Activated CD4-positive, alpha-beta T cell treated with anti-CD3 and anti-CD28 coated beads for 36 hours (primary cell): ENCODE measurements at regions of chr1 and their contacts with region 1.

Region 1: GRCh38 chr1:101309334-101310311 is 72.8 kb downstream of the S1PR1 start:
- DNase-seq: peak; percentile 83
- ATAC-seq: peak; percentile 57
- H3K4me3 Mint-ChIP-seq: peak overlapping the region; percentile 63
- H3K27ac Mint-ChIP-seq: peak overlapping the region; percentile 80
- H3K4me1 Mint-ChIP-seq: peaks cover 71% of the 10 kb centered on the region
- H3K27me3 Mint-ChIP-seq: no peaks in the 10 kb centered on the region

Region 2: DNA sequence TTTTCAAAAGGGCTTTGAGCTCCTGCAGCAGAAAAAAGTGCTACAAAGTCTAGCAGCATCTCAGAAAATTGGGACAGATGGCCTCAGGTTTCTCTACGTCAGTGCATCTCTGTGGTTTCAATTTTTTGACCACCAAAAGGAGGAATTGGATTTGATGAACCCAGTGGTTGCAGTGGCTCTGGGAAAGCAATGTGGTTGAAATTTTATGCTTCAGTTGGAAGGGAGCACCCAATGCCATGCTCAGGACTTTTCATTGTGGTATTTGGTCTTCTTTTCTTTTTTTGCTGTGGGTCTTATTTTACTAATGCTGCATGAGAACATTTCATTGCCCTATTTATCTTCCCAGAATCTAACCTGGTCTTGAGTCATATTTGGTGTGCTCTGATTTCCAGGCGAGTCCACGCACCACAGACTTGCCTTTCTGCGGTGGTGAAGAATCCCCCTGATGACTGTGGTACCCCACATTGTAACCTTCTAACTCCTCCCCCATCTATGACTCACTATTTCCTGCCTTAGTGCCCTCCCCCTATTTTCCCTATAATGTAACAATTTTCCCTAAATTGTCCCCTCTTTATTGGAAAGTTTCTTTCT is 16.1 kb before region 1 on chr1:
- CTCF ChIA-PET with region 1: interaction called, 15 read pairs
- POLR2A ChIA-PET with region 1: interaction called, 7 read pairs
- intact Hi-C with region 1: loop called in 1 of 2 experiments (anchors 1 kb)
- DNase-seq: peak; percentile 79
- ATAC-seq: peak; percentile 25
- H3K4me3 Mint-ChIP-seq: peak overlapping the region; percentile 43
- H3K27ac Mint-ChIP-seq: peak overlapping the region; percentile 82
- H3K4me1 Mint-ChIP-seq: peaks cover 83% of the 10 kb centered on the region
- H3K27me3 Mint-ChIP-seq: no peaks in the 10 kb centered on the region

Region 3: GRCh38 chr1:101323535-101323934 is 13.9 kb after region 1 on chr1:
- CTCF ChIA-PET with region 1: interaction called, 14 read pairs
- POLR2A ChIA-PET with region 1: no interaction called
- intact Hi-C with region 1: no loop called
- DNase-seq: no peak
- ATAC-seq: no peak
- H3K4me3 Mint-ChIP-seq: no peak overlapping the region
- H3K27ac Mint-ChIP-seq: no peak overlapping the region
- H3K4me1 Mint-ChIP-seq: no peaks in the 10 kb centered on the region
- H3K27me3 Mint-ChIP-seq: peaks cover 2% of the 10 kb centered on the region

Region 4: GRCh38 chr1:101346419-101346818 is 36.8 kb after region 1 on chr1:
- CTCF ChIA-PET with region 1: interaction called, 58 read pairs
- POLR2A ChIA-PET with region 1: no interaction called
- intact Hi-C with region 1: no loop called
- DNase-seq: no peak
- ATAC-seq: no peak
- H3K4me3 Mint-ChIP-seq: no peak overlapping the region
- H3K27ac Mint-ChIP-seq: no peak overlapping the region
- H3K4me1 Mint-ChIP-seq: peaks cover 30% of the 10 kb centered on the region
- H3K27me3 Mint-ChIP-seq: no peaks in the 10 kb centered on the region

Region 5: DNA sequence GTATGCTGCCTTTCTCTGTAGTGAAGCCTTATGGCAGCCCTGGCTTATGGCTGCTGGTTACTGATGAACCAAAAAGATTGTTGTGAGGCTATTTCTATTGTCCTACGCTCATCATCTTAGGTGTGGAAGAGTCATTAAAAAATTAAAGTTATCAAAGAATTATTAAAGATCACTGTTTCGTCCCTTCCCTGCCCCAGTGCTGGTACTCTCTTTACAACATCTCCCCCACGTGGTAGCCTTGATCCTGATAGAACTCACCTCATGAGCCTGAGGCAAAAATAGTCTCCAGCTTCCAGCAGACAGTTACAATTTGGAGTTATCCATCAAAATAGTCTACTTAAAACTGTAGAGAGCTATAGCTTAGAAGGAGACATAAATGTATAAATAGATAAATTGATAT is 128.7 kb after region 1 on chr1:
- CTCF ChIA-PET with region 1: interaction called, 3 read pairs
- POLR2A ChIA-PET with region 1: no interaction called
- intact Hi-C with region 1: loop called in 1 of 2 experiments (anchors 5 kb)
- DNase-seq: peak; percentile 21
- ATAC-seq: no peak
- H3K4me3 Mint-ChIP-seq: no peak overlapping the region
- H3K27ac Mint-ChIP-seq: no peak overlapping the region
- H3K4me1 Mint-ChIP-seq: no peaks in the 10 kb centered on the region
- H3K27me3 Mint-ChIP-seq: peaks cover 1% of the 10 kb centered on the region

Region 6: DNA sequence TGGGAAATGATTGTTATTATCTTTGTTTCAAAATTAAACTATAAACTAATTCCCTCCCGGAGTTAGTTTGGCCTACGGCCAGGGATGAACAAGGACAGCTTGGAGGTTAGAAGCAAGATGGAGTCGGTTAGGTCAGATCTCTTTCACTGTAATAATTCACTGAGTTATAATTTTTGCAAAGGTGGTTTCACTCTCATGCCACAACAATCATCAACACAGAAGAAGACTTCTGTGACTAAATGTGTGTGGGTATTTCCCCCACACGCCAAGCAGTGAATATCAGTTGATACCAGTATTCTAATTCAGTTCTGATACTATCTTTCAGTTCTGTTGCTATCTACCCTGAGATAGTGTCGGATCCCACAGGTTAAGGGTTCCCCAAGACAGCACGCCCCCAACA is 142.3 kb after region 1 on chr1:
- CTCF ChIA-PET with region 1: interaction called, 4 read pairs
- POLR2A ChIA-PET with region 1: no interaction called
- intact Hi-C with region 1: loop called (anchors 5 kb)
- DNase-seq: peak; percentile 49
- ATAC-seq: peak; percentile 94
- H3K4me3 Mint-ChIP-seq: no peak overlapping the region
- H3K27ac Mint-ChIP-seq: peak overlapping the region; percentile 21
- H3K4me1 Mint-ChIP-seq: peaks cover 39% of the 10 kb centered on the region
- H3K27me3 Mint-ChIP-seq: peaks cover 13% of the 10 kb centered on the region

Region 7: GRCh38 chr1:101567582-101568189 is 258.1 kb after region 1 on chr1:
- CTCF ChIA-PET with region 1: no interaction called
- POLR2A ChIA-PET with region 1: no interaction called
- intact Hi-C with region 1: loop called (anchors 5 to 10 kb)
- DNase-seq: peak; percentile 68
- ATAC-seq: peak; percentile 81
- H3K4me3 Mint-ChIP-seq: no peak overlapping the region
- H3K27ac Mint-ChIP-seq: no peak overlapping the region
- H3K4me1 Mint-ChIP-seq: no peaks in the 10 kb centered on the region
- H3K27me3 Mint-ChIP-seq: peaks cover 9% of the 10 kb centered on the region